ENCODE measurements at regions of chr21 and their contacts with region 1.

Region 1: DNA sequence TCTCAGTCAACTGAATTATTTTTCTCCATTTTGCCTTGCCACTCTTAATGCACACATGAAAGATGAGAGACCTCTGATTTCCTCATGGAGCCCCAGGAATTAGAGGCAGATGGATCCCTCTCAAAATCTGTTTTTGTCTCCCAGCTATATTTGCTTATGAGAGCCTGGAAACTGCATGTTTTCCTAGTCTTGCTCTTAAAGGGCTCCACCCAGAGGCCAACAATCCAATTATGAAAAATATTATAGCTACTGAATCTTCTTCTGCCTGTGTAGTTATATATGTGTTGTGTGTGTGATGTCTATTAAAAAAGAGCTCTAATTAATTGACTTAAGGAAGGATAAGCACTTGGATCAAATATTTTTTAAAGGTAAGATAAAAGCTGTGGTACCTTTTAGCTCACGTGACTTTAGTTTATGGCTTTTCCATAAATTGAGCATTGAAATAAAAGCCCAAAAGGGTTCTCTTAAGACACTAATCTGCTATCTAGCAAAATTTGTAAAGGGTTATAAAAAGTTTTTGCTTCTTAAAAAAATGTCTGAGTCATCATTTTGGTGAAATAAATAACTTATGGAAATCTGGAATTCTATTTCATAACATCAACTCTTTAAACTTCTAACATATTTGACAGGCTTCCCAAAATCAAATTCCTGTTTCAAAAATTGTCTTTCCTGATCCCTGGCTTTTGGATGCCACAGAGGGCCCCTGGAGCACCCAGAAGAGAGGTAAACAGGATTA is 31.2 kb upstream of the TSPEAR start:
- DNase-seq: no peak
- ATAC-seq: no peak
- H3K4me3 ChIP-seq: no peak overlapping the region
- H3K27ac ChIP-seq: no peak overlapping the region
- H3K4me1 ChIP-seq: no peaks in the 10 kb centered on the region
- H3K27me3 ChIP-seq: no peaks in the 10 kb centered on the region
- CTCF ChIP-seq: peak in 7 of 9 donors; percentile 6 to 52 (median 32)

Region 2: GRCh38 chr21:44510508-44511210 is 231.9 kb before region 1 on chr21:
- intact Hi-C with region 1: loop called in 4 of 10 experiments (anchors 5 kb)
- DNase-seq: peak; percentile 23 to 60
- ATAC-seq: peak; percentile 14 to 80 (median 65)
- H3K4me3 ChIP-seq: peak overlapping the region in 2 of 10 donors; percentile 10 to 23
- H3K27ac ChIP-seq: no peak overlapping the region
- H3K4me1 ChIP-seq: peaks cover 0 to 10% (median 6%) of the 10 kb centered on the region in 9 donors
- H3K27me3 ChIP-seq: peaks cover 0 to 47% (median 17%) of the 10 kb centered on the region in 7 donors
- CTCF ChIP-seq: peak; percentile 45 to 87 (median 74)

Region 3: GRCh38 chr21:44517175-44517899 is 225.2 kb before region 1 on chr21:
- intact Hi-C with region 1: loop called in 4 of 10 experiments (anchors 5 kb)
- DNase-seq: no peak
- ATAC-seq: no peak
- H3K4me3 ChIP-seq: no peak overlapping the region
- H3K27ac ChIP-seq: no peak overlapping the region
- H3K4me1 ChIP-seq: no peaks in the 10 kb centered on the region
- H3K27me3 ChIP-seq: peaks cover 0 to 27% (median 8%) of the 10 kb centered on the region in 7 donors
- CTCF ChIP-seq: no peak

Region 4: GRCh38 chr21:44618504-44618903 is 124.1 kb before region 1 on chr21:
- intact Hi-C with region 1: loop called in 1 of 10 experiments (anchors 10 kb)
- DNase-seq: peak in 1 of 2 donors; percentile 39
- ATAC-seq: peak in 5 of 8 donors; percentile 42 to 88 (median 61)
- H3K4me3 ChIP-seq: no peak overlapping the region
- H3K27ac ChIP-seq: peak overlapping the region in 1 of 10 donors; percentile 71
- H3K4me1 ChIP-seq: peaks cover 0 to 6% (median 0%) of the 10 kb centered on the region in 9 donors
- H3K27me3 ChIP-seq: peaks cover 0 to 25% (median 3%) of the 10 kb centered on the region in 7 donors
- CTCF ChIP-seq: peak in 8 of 9 donors; percentile 8 to 52 (median 34)